GM13977 (cell line): ENCODE measurements at regions of chr11 and their contacts with region 1.

Region 1: DNA sequence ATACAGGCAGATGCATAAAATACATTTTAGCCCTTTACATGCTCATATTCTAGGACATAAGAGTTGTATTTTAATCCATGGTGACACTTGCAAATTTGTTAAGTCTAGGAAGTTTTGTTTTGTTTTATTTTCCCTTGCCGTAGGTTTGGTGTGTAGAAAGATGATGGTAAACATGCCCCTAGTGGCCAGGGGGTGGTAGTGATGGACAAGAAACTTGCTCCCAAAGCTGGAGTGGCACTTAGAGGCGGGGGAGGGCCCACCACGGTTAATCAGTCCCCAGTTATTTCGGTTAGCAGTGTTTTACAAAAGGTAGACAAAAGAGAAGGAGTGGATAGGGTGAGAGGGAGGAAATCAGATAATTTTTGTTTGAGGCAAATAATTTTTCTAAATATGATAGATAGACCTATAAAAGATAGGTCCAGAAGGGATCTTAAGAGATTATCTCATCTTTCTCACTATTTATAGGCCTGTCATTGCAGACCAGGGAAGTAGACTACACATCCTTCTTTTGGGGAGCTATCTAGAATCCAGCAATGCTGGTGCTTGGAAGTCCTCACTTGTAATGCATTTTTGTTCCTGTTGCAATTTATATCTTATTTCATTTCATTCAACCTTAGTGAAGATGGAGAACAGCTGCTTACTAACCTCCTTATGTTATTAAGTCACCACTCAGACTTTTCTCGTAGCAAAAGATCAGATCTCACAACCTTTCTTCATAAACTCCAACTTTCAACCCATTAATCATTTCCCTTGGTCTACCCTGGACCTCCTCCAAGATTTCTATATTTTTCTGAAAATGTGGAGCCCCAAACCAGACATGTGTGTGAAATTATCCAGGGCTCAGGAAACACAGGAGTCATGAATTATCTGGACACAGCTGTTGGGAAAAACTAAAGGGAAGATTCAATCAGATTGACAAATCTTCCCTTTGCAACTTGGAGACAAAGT is 5.9 kb upstream of the BDNF start:
- DNase-seq: peak; percentile 47
- CTCF ChIP-seq: peak; percentile 66

Region 2: DNA sequence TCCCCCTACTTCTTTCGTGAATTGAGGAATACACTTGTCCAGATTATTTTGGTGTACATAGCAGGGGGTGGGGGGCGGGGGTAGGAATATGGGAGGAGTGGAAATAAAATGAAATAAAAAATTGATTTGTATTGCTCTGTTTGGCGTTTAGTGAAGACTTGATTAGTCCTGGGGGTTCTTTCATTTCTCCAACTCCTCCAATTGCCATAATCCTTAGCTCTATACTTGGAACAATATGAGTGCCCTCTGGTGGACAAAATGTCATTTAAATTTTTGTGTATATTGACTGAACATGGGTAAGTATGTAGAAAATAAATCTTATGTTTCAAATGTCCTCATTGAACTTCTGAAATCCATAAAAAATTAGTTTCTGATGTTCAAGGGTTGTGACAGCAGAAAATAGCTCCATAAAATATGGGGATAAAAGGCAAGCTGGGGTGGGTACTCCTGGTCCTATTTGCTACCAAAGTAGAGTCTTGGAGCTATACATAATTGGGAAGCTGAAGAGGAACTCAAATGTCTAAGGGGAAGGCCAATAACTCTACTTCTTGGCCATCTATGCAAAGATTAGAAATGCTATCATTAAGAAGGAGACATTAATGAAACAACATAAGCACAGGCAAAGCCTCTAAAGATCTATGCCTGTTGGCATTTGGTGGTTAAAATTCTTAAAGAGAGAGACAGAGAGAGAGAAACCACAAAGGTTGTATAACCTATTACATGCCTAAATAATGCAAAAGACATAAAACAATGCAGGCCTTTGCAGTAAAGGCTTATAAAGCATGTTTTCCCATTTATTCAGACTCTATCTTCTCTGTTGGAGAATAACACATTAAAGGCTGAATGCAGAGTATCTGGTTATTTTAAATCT is 823.6 kb after region 1 on chr11:
- in situ Hi-C with region 1: loop called (anchors 25 kb)
- DNase-seq: peak; percentile 36
- CTCF ChIP-seq: peak; percentile 44

Region 3: GRCh38 chr11:29343465-29344333 is 1637.6 kb after region 1 on chr11:
- in situ Hi-C with region 1: loop called (anchors 25 kb)
- DNase-seq: peak; percentile 9
- CTCF ChIP-seq: peak; percentile 97